ENCODE measurements at regions of chr22 and their contacts with region 1.

Region 1: DNA sequence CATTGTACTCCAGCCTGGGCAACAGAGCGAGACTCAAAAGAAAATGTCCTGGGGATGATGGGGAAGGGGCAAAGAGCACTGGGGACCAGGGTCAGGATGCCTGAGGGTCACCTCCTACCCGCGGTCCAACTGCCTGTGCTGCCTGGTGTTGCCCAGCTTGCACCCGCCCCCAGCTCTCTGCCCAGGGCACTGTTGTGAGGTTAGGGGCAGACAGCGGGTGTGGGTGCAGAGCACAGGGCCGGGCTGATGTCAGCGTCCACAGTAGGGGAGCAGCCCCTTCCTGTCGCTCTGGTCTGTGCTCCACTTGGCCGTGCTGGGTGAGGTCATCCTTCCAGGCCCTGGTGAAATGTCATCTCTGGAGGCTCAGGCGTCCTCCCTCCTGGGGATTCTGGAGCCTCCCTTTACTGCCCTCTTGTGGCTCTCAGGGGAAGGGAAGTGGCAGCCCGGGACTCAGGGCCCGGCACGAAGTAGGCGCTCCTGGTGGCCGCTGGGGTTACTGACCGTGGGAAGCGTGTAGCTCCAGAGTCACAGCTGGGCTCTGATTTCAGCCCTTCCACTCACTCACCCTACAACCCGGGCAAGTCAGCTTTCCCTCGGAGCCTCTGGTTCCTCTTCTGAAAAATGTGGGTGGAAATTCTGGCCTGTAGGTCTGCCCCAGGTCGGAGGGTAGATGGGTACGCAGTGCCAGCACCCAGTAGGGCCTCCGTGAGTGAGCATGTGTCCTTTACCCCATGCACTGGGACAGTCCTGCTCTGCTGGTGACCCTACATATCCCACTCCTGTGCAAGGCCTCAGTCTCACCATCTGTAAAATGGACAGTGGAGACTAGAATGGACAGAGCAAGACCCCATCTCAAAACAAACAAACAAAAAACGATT is 17.3 kb upstream of the PRR5 start:
- DNase-seq: peak; percentile 72 to 92 (median 84)
- ATAC-seq: peak; percentile 82
- H3K4me3 ChIP-seq: no peak overlapping the region
- H3K4me3 Mint-ChIP-seq: peak overlapping the region; percentile 58
- H3K27ac ChIP-seq: no peak overlapping the region
- H3K27ac Mint-ChIP-seq: peak overlapping the region; percentile 74
- H3K4me1 ChIP-seq: peaks cover 50% of the 10 kb centered on the region
- H3K4me1 Mint-ChIP-seq: peaks cover 45% of the 10 kb centered on the region
- H3K27me3 ChIP-seq: no peaks in the 10 kb centered on the region
- H3K27me3 Mint-ChIP-seq: no peaks in the 10 kb centered on the region
- CTCF ChIP-seq: peak; percentile 95

Region 2: GRCh38 chr22:44664149-44664548 is 20.6 kb before region 1 on chr22:
- CTCF ChIA-PET with region 1: interaction called, 27 read pairs
- POLR2A ChIA-PET with region 1: interaction called, 4 read pairs
- intact Hi-C with region 1: loop called (anchors 1 kb)
- DNase-seq: peak in 8 of 9 experiments; percentile 47 to 83 (median 62)
- ATAC-seq: no peak
- H3K4me3 ChIP-seq: no peak overlapping the region
- H3K4me3 Mint-ChIP-seq: peak overlapping the region; percentile 50
- H3K27ac ChIP-seq: peak overlapping the region; percentile 10 to 70
- H3K27ac Mint-ChIP-seq: peak overlapping the region; percentile 90
- H3K4me1 ChIP-seq: peaks cover 65% of the 10 kb centered on the region
- H3K4me1 Mint-ChIP-seq: peaks cover 58% of the 10 kb centered on the region
- H3K27me3 ChIP-seq: no peaks in the 10 kb centered on the region
- H3K27me3 Mint-ChIP-seq: no peaks in the 10 kb centered on the region
- CTCF ChIP-seq: no peak

Region 3: GRCh38 chr22:44669561-44669976 is 15.2 kb before region 1 on chr22:
- CTCF ChIA-PET with region 1: interaction called, 27 read pairs
- POLR2A ChIA-PET with region 1: interaction called, 4 read pairs
- intact Hi-C with region 1: loop called (anchors 1 kb)
- DNase-seq: peak in 2 of 9 experiments; percentile 40 to 57
- ATAC-seq: no peak
- H3K4me3 ChIP-seq: peak overlapping the region; percentile 60 to 69
- H3K4me3 Mint-ChIP-seq: peak overlapping the region; percentile 78
- H3K27ac ChIP-seq: no peak overlapping the region
- H3K27ac Mint-ChIP-seq: peak overlapping the region; percentile 73
- H3K4me1 ChIP-seq: peaks cover 63% of the 10 kb centered on the region
- H3K4me1 Mint-ChIP-seq: peaks cover 67% of the 10 kb centered on the region
- H3K27me3 ChIP-seq: no peaks in the 10 kb centered on the region
- H3K27me3 Mint-ChIP-seq: no peaks in the 10 kb centered on the region
- CTCF ChIP-seq: peak; percentile 13

Region 4: DNA sequence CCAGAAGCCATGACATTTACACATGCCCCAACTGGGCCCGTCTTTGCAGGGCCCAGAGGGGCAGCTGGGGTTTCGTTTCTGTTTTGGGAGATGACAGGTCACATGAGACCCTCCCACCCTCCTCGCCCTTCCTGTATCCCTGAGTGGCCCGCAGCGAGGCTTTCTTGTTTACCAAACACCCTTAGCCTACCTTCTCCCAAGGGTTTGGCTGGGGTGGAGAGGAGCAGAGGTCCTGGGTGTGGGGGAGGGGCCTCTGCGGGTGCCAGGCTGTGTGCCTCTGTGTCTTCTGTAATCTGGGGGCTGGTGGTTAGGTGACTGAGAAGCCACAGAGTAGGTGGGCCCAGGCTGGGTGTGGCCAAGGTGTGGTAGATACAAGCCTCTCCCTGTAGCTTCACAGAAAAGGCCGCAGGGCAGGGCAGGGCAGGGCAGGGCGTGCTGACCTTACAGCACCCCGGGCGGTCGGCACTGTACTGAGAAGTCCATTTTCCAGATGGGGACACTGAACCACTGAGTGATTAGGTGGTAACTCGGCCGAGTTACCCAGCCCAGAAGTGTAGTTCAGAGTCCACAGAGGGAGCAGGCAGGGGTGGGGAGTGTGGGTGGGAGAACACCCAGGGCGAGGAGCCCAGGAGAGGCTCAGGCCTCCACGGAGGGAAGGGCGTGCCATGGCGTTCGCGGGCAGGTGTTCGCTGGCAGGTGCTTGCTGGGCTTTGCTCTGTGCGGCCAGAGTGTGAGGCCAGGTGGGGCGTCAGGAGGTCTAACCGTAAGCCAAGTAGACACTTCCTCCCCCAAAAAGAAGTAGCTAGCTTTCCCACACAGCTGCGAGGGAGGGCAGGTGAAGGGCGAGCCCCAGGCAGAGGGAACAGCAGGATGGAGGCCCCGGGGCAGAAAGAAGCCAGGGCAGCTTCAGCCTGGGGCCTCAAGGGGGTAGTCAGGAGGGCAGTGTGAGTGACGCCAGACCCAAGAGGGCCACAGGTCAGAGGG is 26.0 kb after region 1 on chr22:
- CTCF ChIA-PET with region 1: interaction called, 10 read pairs
- POLR2A ChIA-PET with region 1: no interaction called
- intact Hi-C with region 1: no loop called
- DNase-seq: peak in 8 of 9 experiments; percentile 26 to 81 (median 69)
- ATAC-seq: peak; percentile 81
- H3K4me3 ChIP-seq: peak overlapping the region; percentile 37 to 48
- H3K4me3 Mint-ChIP-seq: peak overlapping the region; percentile 84
- H3K27ac ChIP-seq: peak overlapping the region; percentile 44 to 80
- H3K27ac Mint-ChIP-seq: peak overlapping the region; percentile 93
- H3K4me1 ChIP-seq: peaks cover 69% of the 10 kb centered on the region
- H3K4me1 Mint-ChIP-seq: peaks cover 63% of the 10 kb centered on the region
- H3K27me3 ChIP-seq: no peaks in the 10 kb centered on the region
- H3K27me3 Mint-ChIP-seq: no peaks in the 10 kb centered on the region
- CTCF ChIP-seq: no peak

Region 5: GRCh38 chr22:44735540-44736488 is 51.1 kb after region 1 on chr22:
- CTCF ChIA-PET with region 1: interaction called, 17 read pairs
- POLR2A ChIA-PET with region 1: no interaction called
- intact Hi-C with region 1: no loop called
- DNase-seq: peak; percentile 67 to 93 (median 82)
- ATAC-seq: peak; percentile 87
- H3K4me3 ChIP-seq: no peak overlapping the region
- H3K4me3 Mint-ChIP-seq: no peak overlapping the region
- H3K27ac ChIP-seq: peak overlapping the region in 1 of 2 experiments; percentile 19
- H3K27ac Mint-ChIP-seq: peak overlapping the region; percentile 67
- H3K4me1 ChIP-seq: no peaks in the 10 kb centered on the region
- H3K4me1 Mint-ChIP-seq: peaks cover 6% of the 10 kb centered on the region
- H3K27me3 ChIP-seq: no peaks in the 10 kb centered on the region
- H3K27me3 Mint-ChIP-seq: no peaks in the 10 kb centered on the region
- CTCF ChIP-seq: peak; percentile 98

Measured in CD8-positive, alpha-beta T cell (primary cell).